Activated CD4-positive, alpha-beta memory T cell treated with anti-CD3 and anti-CD28 coated beads for 36 hours (primary cell): ENCODE measurements at regions of chr2 and their contacts with region 1.

Region 1: DNA sequence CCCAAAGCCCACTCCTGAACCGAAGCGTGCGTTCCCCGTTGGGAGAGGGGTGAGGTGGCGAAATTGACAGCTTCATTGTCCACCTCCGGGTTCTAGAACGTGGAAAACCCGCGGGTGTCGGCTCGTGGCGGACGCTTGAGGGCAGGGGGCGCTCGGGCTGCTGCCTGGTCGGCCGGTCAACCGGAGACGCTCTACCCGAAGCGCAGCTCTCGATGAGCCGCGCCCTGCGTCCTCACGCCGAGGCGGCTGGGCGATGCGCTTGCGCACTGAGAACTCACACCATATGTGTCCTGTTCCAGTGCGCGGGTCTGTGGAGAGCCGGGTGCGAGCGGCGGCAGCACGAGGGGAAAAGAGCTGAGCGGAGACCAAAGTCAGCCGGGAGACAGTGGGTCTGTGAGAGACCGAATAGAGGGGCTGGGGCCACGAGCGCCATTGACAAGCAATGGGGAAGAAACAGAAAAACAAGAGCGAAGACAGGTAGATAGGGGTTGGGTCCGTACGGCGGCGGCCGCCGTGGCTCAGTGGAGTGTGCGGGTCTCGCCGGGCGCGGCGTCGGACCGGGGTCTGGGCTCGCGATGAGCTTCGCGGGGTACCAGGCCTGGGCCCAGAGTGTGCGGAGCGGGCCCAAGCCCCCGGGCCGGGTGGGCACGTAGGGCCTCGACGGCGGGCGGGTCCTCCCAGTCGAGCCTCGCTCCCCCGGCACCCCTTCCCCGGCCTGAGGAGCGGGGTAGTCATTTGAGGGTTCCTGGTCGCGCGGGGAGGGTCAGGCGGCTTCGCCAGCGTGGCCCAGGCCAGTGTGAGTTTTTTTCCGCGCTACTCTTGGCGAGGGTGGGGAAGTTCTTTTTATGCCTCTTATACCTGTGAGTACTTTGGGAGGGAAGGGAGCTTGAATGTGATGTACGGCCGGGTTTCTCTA is at the start of gene EIF5B:
- DNase-seq: peak; percentile 95
- H3K4me3 Mint-ChIP-seq: no peak within 1 kb of the TSS
- H3K27ac Mint-ChIP-seq: no peak within 1 kb of the TSS
- H3K4me1 Mint-ChIP-seq: peaks cover 55% of the 10 kb centered on the region
- H3K27me3 Mint-ChIP-seq: no peaks in the 10 kb centered on the region
- total RNA-seq, gene EIF5B: 69.7 to 72.0 TPM

Region 2: DNA sequence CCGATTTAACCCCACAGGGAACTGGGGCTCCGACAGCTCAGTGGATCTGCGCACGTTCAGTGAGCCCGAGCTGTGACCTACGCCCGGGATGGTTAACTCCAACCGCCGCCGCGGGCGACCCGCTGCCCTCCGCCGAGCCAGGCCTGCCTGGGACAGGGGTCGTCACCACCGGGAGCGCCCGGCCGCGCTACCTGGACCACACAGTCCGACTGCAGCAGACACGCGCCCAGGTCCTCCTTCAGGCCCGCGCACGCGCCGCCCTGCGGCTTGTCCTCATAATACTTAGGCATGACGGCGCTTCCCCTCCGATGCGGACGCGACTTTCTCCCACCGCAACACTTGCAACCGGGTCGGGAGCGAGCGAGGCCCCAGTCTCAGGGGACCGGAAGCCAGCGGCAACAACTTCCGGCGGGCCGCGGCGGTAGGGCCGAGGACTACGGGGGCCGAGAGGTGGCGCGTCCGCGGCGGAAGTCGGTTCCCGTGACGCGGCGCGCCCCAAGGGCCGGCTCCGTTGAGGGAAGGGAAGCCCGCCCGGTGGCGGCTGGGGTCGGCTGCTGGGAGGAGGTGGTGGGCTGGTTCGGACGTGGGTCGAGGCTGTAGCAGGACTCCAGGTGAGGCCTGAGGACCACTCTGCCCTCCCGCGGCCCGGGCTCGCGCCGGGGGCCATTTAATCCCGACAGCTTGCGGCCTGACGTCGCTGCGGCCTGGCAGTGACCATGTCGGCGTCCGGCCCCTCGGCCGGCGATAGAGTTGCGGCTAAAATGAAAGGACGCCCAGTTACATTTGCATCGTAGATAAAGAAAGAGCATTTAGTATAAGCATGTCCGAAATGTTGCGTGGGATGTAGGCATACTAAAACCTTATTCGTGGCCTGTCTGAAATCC is 729.0 kb before region 1 on chr2 and contains the starts of genes COA5 and UNC50:
- CTCF ChIA-PET with region 1: no interaction called
- POLR2A ChIA-PET with region 1: no interaction called
- intact Hi-C with region 1: loop called (anchors 1 kb)
- DNase-seq: peak; percentile 94
- H3K4me3 Mint-ChIP-seq: peak within 1 kb of the TSS; percentile 92
- H3K27ac Mint-ChIP-seq: peak within 1 kb of the TSS; percentile 82
- H3K4me1 Mint-ChIP-seq: peaks cover 61% of the 10 kb centered on the region
- H3K27me3 Mint-ChIP-seq: no peaks in the 10 kb centered on the region
- total RNA-seq, gene COA5: 26.7 to 28.5 TPM
- total RNA-seq, gene UNC50: 33.4 to 36.2 TPM

Region 3: GRCh38 chr2:99154643-99155536 is 182.5 kb before region 1 on chr2 and contains the starts of genes LIPT1 and TSGA10:
- CTCF ChIA-PET with region 1: no interaction called
- POLR2A ChIA-PET with region 1: interaction called, 6 read pairs
- intact Hi-C with region 1: loop called (anchors 1 kb)
- DNase-seq: peak; percentile 96
- H3K4me3 Mint-ChIP-seq: no peak within 1 kb of the TSS
- H3K27ac Mint-ChIP-seq: peak within 1 kb of the TSS; percentile 91
- H3K4me1 Mint-ChIP-seq: peaks cover 24% of the 10 kb centered on the region
- H3K27me3 Mint-ChIP-seq: no peaks in the 10 kb centered on the region
- total RNA-seq, gene LIPT1: 3.3 to 4.6 TPM
- total RNA-seq, gene TSGA10: 6.3 to 7.0 TPM

Region 4: GRCh38 chr2:99275882-99276281 is 61.5 kb before region 1 on chr2:
- CTCF ChIA-PET with region 1: no interaction called
- POLR2A ChIA-PET with region 1: no interaction called
- intact Hi-C with region 1: no loop called
- DNase-seq: no peak
- H3K4me3 Mint-ChIP-seq: no peak overlapping the region
- H3K27ac Mint-ChIP-seq: no peak overlapping the region
- H3K4me1 Mint-ChIP-seq: no peaks in the 10 kb centered on the region
- H3K27me3 Mint-ChIP-seq: no peaks in the 10 kb centered on the region

Region 5: GRCh38 chr2:99354070-99354469 is 16.7 kb after region 1 on chr2:
- CTCF ChIA-PET with region 1: no interaction called
- POLR2A ChIA-PET with region 1: no interaction called
- intact Hi-C with region 1: no loop called
- DNase-seq: no peak
- H3K4me3 Mint-ChIP-seq: no peak overlapping the region
- H3K27ac Mint-ChIP-seq: no peak overlapping the region
- H3K4me1 Mint-ChIP-seq: peaks cover 59% of the 10 kb centered on the region
- H3K27me3 Mint-ChIP-seq: no peaks in the 10 kb centered on the region

Region 6: GRCh38 chr2:99377879-99378278 is 40.5 kb after region 1 on chr2:
- CTCF ChIA-PET with region 1: interaction called, 5 read pairs
- POLR2A ChIA-PET with region 1: interaction called, 6 read pairs
- intact Hi-C with region 1: loop called (anchors 2 kb)
- DNase-seq: no peak
- H3K4me3 Mint-ChIP-seq: no peak overlapping the region
- H3K27ac Mint-ChIP-seq: peak overlapping the region; percentile 67
- H3K4me1 Mint-ChIP-seq: peaks cover 35% of the 10 kb centered on the region
- H3K27me3 Mint-ChIP-seq: no peaks in the 10 kb centered on the region

Region 7: DNA sequence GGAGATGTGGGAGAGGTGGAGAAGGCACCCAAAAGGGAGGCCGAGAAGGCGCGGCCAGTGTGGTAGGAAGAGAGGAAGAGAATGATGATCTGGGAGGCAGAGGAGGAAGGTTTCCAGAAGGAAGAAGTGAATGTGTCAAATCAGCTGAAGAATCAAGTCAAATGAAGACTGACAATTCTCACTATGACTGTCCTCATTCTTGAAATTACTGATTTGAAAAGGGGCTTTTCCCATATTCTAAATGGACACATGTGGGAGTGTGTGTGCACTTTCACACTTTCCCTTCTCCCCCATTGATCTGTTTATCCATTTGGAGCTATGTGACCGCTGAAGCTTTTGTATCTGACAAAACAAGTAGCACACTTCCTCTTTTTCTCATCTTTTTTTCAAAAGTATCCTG is 798.9 kb after region 1 on chr2:
- CTCF ChIA-PET with region 1: no interaction called
- POLR2A ChIA-PET with region 1: no interaction called
- intact Hi-C with region 1: no loop called
- DNase-seq: peak; percentile 15
- H3K4me3 Mint-ChIP-seq: no peak overlapping the region
- H3K27ac Mint-ChIP-seq: no peak overlapping the region
- H3K4me1 Mint-ChIP-seq: peaks cover 13% of the 10 kb centered on the region
- H3K27me3 Mint-ChIP-seq: peaks cover 18% of the 10 kb centered on the region

Region 8: GRCh38 chr2:100580367-100581276 is 1243.3 kb after region 1 on chr2:
- CTCF ChIA-PET with region 1: no interaction called
- POLR2A ChIA-PET with region 1: no interaction called
- intact Hi-C with region 1: loop called (anchors 10 kb)
- DNase-seq: peak; percentile 64
- H3K4me3 Mint-ChIP-seq: peak overlapping the region; percentile 71
- H3K27ac Mint-ChIP-seq: peak overlapping the region; percentile 96
- H3K4me1 Mint-ChIP-seq: peaks cover 38% of the 10 kb centered on the region
- H3K27me3 Mint-ChIP-seq: no peaks in the 10 kb centered on the region